SK-N-SH (cell line): ENCODE measurements at regions of chr2 and their contacts with region 1.

Region 1: DNA sequence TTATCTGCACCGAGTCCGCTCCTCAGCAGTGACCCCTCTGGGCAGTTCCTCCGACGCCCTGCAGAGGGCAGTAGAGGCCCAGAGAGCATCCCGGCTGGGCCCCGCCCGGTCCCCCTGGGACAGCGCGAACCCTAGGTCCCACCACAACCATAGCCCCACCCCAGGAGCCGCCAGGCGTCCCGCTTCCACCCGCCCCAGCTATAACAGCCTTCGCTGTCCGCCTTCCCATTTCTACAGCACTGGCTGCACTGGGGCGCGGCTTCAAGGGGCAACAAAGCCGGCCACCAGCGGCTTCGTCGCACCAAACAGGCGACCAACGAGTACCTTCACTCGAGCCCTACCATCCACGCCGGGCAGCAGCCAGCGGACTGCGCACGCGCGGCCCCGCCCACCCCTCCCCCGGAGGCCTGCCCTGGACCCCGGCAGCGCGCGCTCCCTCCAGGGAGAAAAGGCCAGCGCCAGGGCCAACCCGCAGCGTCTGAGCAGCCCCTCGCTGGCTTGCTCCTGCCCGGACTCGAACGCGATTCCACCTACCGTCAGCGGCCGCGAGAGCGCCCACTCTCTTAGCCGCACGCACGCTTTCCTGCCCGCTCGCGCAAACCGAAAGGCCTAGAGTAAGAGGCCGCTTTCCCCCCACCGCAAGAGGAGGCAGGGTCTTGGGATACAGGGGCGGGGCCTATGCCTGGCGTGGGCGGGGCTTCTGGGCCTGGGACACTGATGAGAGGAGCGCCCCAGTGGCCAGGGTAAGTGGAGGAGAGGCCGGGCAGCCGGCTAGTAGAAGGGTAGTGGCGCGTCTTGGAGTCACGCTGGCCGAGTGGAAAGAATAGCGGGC is at the start of gene NHEJ1:
- DNase-seq: peak; percentile 98
- H3K4me3 ChIP-seq: peak within 1 kb of the TSS; percentile 69 to 75
- H3K27ac ChIP-seq: peak within 1 kb of the TSS; percentile 90 to 99
- H3K4me1 ChIP-seq: peaks cover 0 to 11% of the 10 kb centered on the region in 2 experiments; a peak in 1 of 4 replicates
- H3K27me3 ChIP-seq: no peaks in the 10 kb centered on the region
- CTCF ChIP-seq: peak; percentile 96
- EP300 ChIP-seq: no peak
- RAD21 ChIP-seq: peak; percentile 81
- polyA plus RNA-seq, gene NHEJ1: 16.3 and 21.0 TPM in 2 replicates

Region 2: GRCh38 chr2:218788529-218789255 is 371.7 kb before region 1 on chr2:
- CTCF ChIA-PET with region 1: no interaction called
- POLR2A ChIA-PET with region 1: no interaction called
- DNase-seq: no peak
- H3K4me3 ChIP-seq: no peak overlapping the region
- H3K27ac ChIP-seq: no peak overlapping the region
- H3K4me1 ChIP-seq: no peaks in the 10 kb centered on the region; a peak in 1 of 4 replicates
- H3K27me3 ChIP-seq: no peaks in the 10 kb centered on the region
- CTCF ChIP-seq: no peak
- EP300 ChIP-seq: no peak
- RAD21 ChIP-seq: no peak

Region 3: GRCh38 chr2:218876562-218877219 is 283.7 kb before region 1 on chr2:
- CTCF ChIA-PET with region 1: interaction called, 11 read pairs
- POLR2A ChIA-PET with region 1: no interaction called
- DNase-seq: peak; percentile 88
- H3K4me3 ChIP-seq: no peak overlapping the region
- H3K27ac ChIP-seq: peak overlapping the region in 1 of 2 experiments; percentile 78; a peak in 2 of 4 replicates
- H3K4me1 ChIP-seq: peaks cover 0 to 54% of the 10 kb centered on the region in 2 experiments; a peak in 2 of 4 replicates
- H3K27me3 ChIP-seq: peaks cover 39% of the 10 kb centered on the region
- CTCF ChIP-seq: peak; percentile 95
- EP300 ChIP-seq: peak in 1 of 2 experiments; percentile 26; a peak in 1 of 4 replicates
- RAD21 ChIP-seq: peak; percentile 95

Region 4: DNA sequence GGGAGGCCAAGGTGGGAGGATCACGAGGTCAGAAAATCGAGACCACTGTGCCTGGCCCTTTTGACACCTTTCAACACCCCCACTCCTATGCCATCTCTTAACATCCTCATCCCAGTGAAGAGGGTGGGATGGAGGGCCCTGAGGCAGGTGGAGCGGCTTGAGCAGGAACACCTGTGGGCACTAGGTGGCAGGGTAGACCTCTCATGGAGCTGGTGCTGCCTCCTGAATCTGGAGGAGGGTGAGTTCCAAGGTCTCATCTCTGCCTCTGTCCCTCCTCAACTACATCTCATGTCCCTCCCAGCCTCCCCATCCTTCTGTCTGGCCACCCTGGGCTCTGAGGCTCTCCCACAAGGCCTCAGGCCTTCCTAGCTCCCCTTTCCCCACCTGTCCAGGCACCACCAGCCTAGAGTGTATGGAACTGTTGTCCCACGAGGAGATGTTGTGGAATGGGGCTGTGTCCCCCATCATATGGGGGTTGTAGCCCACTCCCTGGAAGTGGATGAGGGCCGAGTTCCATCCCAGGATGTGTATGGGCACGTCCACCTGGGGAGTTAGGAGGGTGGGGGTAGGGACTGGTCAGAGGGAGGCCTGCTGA is 150.1 kb before region 1 on chr2:
- CTCF ChIA-PET with region 1: interaction called, 12 read pairs
- POLR2A ChIA-PET with region 1: no interaction called
- DNase-seq: peak; percentile 64
- H3K4me3 ChIP-seq: no peak overlapping the region
- H3K27ac ChIP-seq: no peak overlapping the region
- H3K4me1 ChIP-seq: no peaks in the 10 kb centered on the region
- H3K27me3 ChIP-seq: no peaks in the 10 kb centered on the region
- CTCF ChIP-seq: peak; percentile 30
- EP300 ChIP-seq: no peak
- RAD21 ChIP-seq: peak; percentile 62

Region 5: GRCh38 chr2:219125225-219125885 is 35.0 kb before region 1 on chr2:
- CTCF ChIA-PET with region 1: interaction called, 40 read pairs
- POLR2A ChIA-PET with region 1: no interaction called
- DNase-seq: no peak
- H3K4me3 ChIP-seq: no peak overlapping the region
- H3K27ac ChIP-seq: no peak overlapping the region
- H3K4me1 ChIP-seq: no peaks in the 10 kb centered on the region; a peak in 2 of 4 replicates
- H3K27me3 ChIP-seq: no peaks in the 10 kb centered on the region
- CTCF ChIP-seq: no peak
- EP300 ChIP-seq: no peak
- RAD21 ChIP-seq: no peak

Region 6: GRCh38 chr2:219149667-219150066 is 10.7 kb before region 1 on chr2:
- CTCF ChIA-PET with region 1: interaction called, 13 read pairs
- POLR2A ChIA-PET with region 1: no interaction called
- DNase-seq: no peak
- H3K4me3 ChIP-seq: no peak overlapping the region
- H3K27ac ChIP-seq: peak overlapping the region in 1 of 2 experiments; percentile 56; a peak in 2 of 4 replicates
- H3K4me1 ChIP-seq: peaks cover 0 to 4% of the 10 kb centered on the region in 2 experiments; a peak in 1 of 4 replicates
- H3K27me3 ChIP-seq: no peaks in the 10 kb centered on the region
- CTCF ChIP-seq: no peak
- EP300 ChIP-seq: no peak
- RAD21 ChIP-seq: no peak

Region 7: DNA sequence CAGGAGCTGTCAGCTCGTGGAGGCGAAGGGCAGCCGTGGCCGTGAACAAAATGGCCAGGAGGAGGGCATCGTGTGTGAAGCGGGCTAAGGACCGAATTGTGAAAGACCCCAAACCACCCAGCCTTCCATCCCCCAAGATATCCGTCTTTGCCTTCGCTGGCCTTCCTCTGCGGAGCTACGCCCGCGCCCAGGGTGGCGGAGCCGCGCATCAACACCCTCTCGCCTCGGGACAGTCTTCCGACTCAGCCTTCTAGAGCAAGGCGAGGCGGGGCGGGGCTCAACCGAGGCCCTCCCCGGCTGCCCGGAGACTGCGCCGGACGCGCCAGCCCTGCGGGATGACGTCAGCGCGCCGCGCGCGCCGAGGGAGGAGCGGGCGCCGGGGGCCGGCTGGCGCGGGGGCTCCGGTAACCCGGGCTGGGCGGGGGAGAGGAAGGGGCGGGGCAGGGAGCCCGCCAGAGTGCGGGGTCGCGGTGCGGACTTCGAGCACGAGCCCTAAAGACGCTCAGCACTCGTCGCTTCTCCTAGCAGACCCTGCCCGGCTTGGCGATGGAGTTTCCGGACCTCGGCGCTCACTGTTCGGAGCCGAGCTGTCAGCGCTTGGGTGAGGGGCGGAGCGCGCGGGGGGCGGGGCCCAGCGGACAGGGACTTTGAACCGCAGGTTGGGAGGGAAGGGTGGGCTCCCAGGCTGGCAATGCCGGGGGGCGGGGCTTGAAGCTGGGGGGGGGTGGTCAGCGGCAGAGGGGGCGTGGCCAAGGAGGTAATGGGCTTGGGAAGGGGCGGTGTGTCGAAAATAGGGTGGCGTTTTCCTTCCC is 46.2 kb after region 1 on chr2 and contains the start of gene ZFAND2B:
- CTCF ChIA-PET with region 1: interaction called, 10 read pairs
- POLR2A ChIA-PET with region 1: no interaction called
- DNase-seq: peak; percentile 99
- H3K4me3 ChIP-seq: peak within 1 kb of the TSS; percentile 69
- H3K27ac ChIP-seq: peak within 1 kb of the TSS; percentile 67 to 93; a peak in 3 of 4 replicates
- H3K4me1 ChIP-seq: peaks cover 13 to 20% of the 10 kb centered on the region in 2 experiments; a peak in 3 of 4 replicates
- H3K27me3 ChIP-seq: no peaks in the 10 kb centered on the region
- CTCF ChIP-seq: no peak
- EP300 ChIP-seq: no peak
- RAD21 ChIP-seq: 0 out of 2 replicates have a peak, but pooled peaks have one; percentile 2
- polyA plus RNA-seq, gene ZFAND2B: 39.9 and 46.9 TPM in 2 replicates

Region 8: GRCh38 chr2:219218732-219219701 is 58.6 kb after region 1 on chr2 and contains the start of gene ABCB6:
- CTCF ChIA-PET with region 1: interaction called, 16 read pairs
- POLR2A ChIA-PET with region 1: no interaction called
- DNase-seq: peak; percentile 98
- H3K4me3 ChIP-seq: peak within 1 kb of the TSS; percentile 60 to 70
- H3K27ac ChIP-seq: peak within 1 kb of the TSS; percentile 87 to 99
- H3K4me1 ChIP-seq: peaks cover 5 to 30% of the 10 kb centered on the region in 2 experiments; a peak in 3 of 4 replicates
- H3K27me3 ChIP-seq: no peaks in the 10 kb centered on the region
- CTCF ChIP-seq: no peak
- EP300 ChIP-seq: no peak
- RAD21 ChIP-seq: no peak
- polyA plus RNA-seq, gene ABCB6: 26.5 and 27.4 TPM in 2 replicates